ENCODE measurements at regions of chr10 and their contacts with region 1.

Region 1: GRCh38 chr10:47024399-47025252 is 113.4 kb downstream of the PTPN20 start:
- DNase-seq: peak; percentile 69 to 87
- H3K4me3 ChIP-seq: no peak overlapping the region
- H3K27ac ChIP-seq: no peak overlapping the region
- H3K4me1 ChIP-seq: no peaks in the 10 kb centered on the region
- H3K27me3 ChIP-seq: no peaks in the 10 kb centered on the region
- CTCF ChIP-seq: peak in 5 of 7 experiments; percentile 35 to 80 (median 60)
- EP300 ChIP-seq: no peak
- POLR2A ChIP-seq: no peak

Region 2: GRCh38 chr10:47318706-47319105 is 294.1 kb after region 1 on chr10:
- intact Hi-C with region 1: loop called (anchors 5 kb)
- DNase-seq: no peak
- H3K4me3 ChIP-seq: no peak overlapping the region
- H3K27ac ChIP-seq: no peak overlapping the region
- H3K4me1 ChIP-seq: no peaks in the 10 kb centered on the region
- H3K27me3 ChIP-seq: peaks cover 0 to 30% (median 11%) of the 10 kb centered on the region in 3 donors
- CTCF ChIP-seq: no peak
- EP300 ChIP-seq: no peak
- POLR2A ChIP-seq: no peak